A673 (cell line): ENCODE measurements at regions of chr2 and their contacts with region 1.

Region 1: DNA sequence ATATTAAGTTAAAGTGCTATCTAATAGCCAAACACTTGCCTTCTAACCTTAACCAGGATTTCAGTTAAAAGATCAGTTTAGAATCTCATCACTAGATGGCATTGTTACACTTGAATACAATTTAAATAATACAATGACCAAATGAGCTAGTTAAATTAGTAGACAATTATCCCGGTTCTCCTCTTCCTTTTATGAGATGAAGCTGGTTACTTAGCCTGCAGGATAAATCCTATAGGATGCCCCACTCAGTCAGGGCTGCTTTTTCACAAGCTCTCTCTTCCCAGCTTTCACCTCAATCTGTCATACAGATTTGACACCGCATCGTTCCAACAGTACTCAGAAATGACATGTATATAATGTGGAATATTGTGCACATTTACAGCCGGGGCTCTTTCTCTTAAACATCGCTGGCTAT is 678.8 kb downstream of the KCNJ3 start:
- DNase-seq: peak; percentile 25
- H3K4me3 ChIP-seq: no peak overlapping the region
- H3K27ac ChIP-seq: no peak overlapping the region
- H3K4me1 ChIP-seq: peaks cover 6% of the 10 kb centered on the region
- H3K27me3 ChIP-seq: no peaks in the 10 kb centered on the region
- CTCF ChIP-seq: peak; percentile 53; the same call in 1 of the 2 replicates

Region 2: GRCh38 chr2:155815886-155816285 is 438.6 kb after region 1 on chr2:
- CTCF ChIA-PET with region 1: interaction called, 3 read pairs
- POLR2A ChIA-PET with region 1: no interaction called
- intact Hi-C with region 1: loop called (anchors 2 kb)
- DNase-seq: peak; percentile 36
- H3K4me3 ChIP-seq: no peak overlapping the region
- H3K27ac ChIP-seq: no peak overlapping the region
- H3K4me1 ChIP-seq: no peaks in the 10 kb centered on the region
- H3K27me3 ChIP-seq: no peaks in the 10 kb centered on the region
- CTCF ChIP-seq: peak; percentile 44

Region 3: GRCh38 chr2:155913356-155913755 is 536.1 kb after region 1 on chr2:
- CTCF ChIA-PET with region 1: no interaction called
- POLR2A ChIA-PET with region 1: no interaction called
- intact Hi-C with region 1: no loop called
- DNase-seq: no peak
- H3K4me3 ChIP-seq: no peak overlapping the region
- H3K27ac ChIP-seq: no peak overlapping the region
- H3K4me1 ChIP-seq: no peaks in the 10 kb centered on the region
- H3K27me3 ChIP-seq: no peaks in the 10 kb centered on the region
- CTCF ChIP-seq: no peak

Region 4: DNA sequence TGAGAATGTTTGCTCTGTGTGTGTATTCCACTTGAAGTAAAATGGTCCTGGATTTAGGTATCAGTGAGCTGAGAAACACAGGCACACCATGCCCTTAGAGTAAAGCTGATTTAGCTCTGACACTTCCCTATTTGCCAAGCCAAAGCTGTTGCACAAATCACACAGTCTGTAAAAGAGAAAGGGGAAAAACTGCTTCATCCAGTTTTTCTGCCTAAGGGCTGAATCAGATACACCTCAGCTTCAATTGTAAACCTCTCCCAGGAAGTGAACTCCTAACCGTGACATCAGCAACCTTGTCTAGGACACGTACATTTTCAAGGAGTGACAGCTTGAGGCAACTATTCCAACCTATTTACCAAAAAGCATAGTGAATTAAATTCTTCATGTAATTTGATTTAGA is 804.9 kb after region 1 on chr2:
- CTCF ChIA-PET with region 1: no interaction called
- POLR2A ChIA-PET with region 1: no interaction called
- intact Hi-C with region 1: no loop called
- DNase-seq: no peak
- H3K4me3 ChIP-seq: no peak overlapping the region
- H3K27ac ChIP-seq: no peak overlapping the region
- H3K4me1 ChIP-seq: no peaks in the 10 kb centered on the region
- H3K27me3 ChIP-seq: peaks cover 8% of the 10 kb centered on the region
- CTCF ChIP-seq: no peak

Region 5: DNA sequence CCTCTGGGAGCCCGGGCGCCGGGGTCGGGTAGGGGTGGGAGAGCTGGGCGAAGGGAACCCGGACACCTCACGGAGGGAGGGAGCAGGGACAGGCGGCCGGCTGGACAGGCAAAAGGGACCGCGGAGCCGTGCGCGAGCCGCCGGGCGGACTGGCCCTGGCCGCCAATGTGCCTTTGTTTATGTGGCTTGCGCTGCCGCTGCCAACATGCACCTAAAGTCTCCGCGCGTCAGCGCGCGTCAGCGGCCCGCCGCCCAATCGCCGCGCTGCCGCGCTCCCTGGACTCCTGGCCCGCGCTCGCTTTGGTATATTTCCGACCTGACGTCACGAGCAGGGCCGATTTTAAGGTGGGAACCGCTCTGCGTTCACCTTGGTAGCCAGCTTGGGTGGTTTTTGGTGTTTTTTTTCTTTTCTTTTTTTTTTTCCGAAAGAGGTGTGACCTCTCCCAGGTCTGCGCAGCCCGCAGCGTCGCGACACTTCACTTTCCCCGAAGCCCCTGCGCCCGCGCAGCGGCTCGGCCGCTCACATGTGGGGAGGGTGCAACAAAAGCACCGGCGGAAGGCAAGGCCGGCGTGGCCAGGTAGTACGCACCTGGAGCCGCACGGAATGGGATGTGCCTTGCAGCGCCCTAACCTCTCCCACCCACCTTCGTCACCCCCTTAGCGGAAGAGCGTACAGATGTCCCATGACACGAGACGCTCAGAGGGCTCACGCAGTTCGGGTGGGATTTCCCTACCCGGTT is 955.4 kb after region 1 on chr2 and contains the start of gene NR4A2:
- CTCF ChIA-PET with region 1: no interaction called
- POLR2A ChIA-PET with region 1: no interaction called
- intact Hi-C with region 1: loop called (anchors 10 kb)
- DNase-seq: peak; percentile 87
- H3K4me3 ChIP-seq: peak within 1 kb of the TSS; percentile 79
- H3K27ac ChIP-seq: peak within 1 kb of the TSS; percentile 91
- H3K4me1 ChIP-seq: peaks cover 20% of the 10 kb centered on the region
- H3K27me3 ChIP-seq: no peaks in the 10 kb centered on the region
- CTCF ChIP-seq: no peak
- total RNA-seq, gene NR4A2: 1.1 and 1.8 TPM in 2 replicates

Region 6: GRCh38 chr2:156892467-156893281 is 1515.4 kb after region 1 on chr2:
- CTCF ChIA-PET with region 1: no interaction called
- POLR2A ChIA-PET with region 1: no interaction called
- intact Hi-C with region 1: loop called (anchors 5 kb)
- DNase-seq: peak; percentile 61
- H3K4me3 ChIP-seq: peak overlapping the region; percentile 26
- H3K27ac ChIP-seq: no peak overlapping the region
- H3K4me1 ChIP-seq: no peaks in the 10 kb centered on the region
- H3K27me3 ChIP-seq: peaks cover 14% of the 10 kb centered on the region
- CTCF ChIP-seq: peak; percentile 67

Region 7: GRCh38 chr2:157055660-157056199 is 1678.5 kb after region 1 on chr2:
- CTCF ChIA-PET with region 1: no interaction called
- POLR2A ChIA-PET with region 1: no interaction called
- intact Hi-C with region 1: loop called (anchors 5 kb)
- DNase-seq: peak; percentile 54
- H3K4me3 ChIP-seq: no peak overlapping the region
- H3K27ac ChIP-seq: no peak overlapping the region
- H3K4me1 ChIP-seq: peaks cover 5% of the 10 kb centered on the region
- H3K27me3 ChIP-seq: no peaks in the 10 kb centered on the region
- CTCF ChIP-seq: peak; percentile 67

Region 8: GRCh38 chr2:157194097-157194688 is 1816.9 kb after region 1 on chr2:
- CTCF ChIA-PET with region 1: no interaction called
- POLR2A ChIA-PET with region 1: no interaction called
- intact Hi-C with region 1: loop called (anchors 2 kb)
- DNase-seq: peak; percentile 71
- H3K4me3 ChIP-seq: no peak overlapping the region
- H3K27ac ChIP-seq: no peak overlapping the region
- H3K4me1 ChIP-seq: no peaks in the 10 kb centered on the region
- H3K27me3 ChIP-seq: no peaks in the 10 kb centered on the region
- CTCF ChIP-seq: peak; percentile 82

Region 9: DNA sequence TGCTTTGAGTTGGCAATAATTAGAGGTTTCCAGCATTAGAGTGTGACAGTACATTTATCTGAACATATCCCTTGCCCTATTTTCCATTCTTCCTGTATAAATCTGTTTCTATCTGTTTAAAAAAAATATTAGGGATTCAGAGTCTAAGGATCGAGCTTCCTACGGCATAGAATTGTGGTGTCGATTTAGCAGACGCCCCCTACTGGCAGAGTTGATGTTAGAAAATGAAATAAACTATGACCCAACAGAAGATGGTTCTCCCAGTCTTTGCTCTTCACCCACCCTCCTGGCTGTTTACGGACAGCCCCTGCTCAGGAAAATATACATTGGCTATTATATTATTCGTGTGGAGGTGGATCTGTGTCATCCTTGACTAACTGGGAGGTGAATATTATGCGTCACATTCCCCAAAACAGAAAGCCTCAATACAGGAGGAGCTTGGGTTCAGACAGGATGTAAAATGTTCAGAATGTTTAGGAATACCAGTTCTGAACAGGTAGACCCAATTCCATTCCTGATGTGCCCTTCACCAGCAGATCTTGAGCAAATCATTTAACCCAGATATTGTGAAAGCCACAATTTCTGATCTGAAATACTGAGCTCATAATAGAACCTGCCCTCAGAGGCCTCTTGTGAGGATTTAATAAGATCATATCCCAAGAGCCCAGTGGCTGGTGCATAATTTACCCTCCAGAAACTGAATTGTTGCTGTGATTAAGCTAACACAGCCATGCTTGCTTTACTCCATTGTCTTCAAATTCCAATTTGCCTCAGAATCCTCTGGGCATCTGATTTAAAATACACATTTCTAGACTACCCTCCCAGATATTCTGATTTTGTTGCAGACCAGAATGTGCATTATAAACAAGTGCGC is 1959.1 kb after region 1 on chr2:
- CTCF ChIA-PET with region 1: interaction called, 5 read pairs
- POLR2A ChIA-PET with region 1: no interaction called
- intact Hi-C with region 1: loop called (anchors 10 kb)
- DNase-seq: peak; percentile 60
- H3K4me3 ChIP-seq: no peak overlapping the region
- H3K27ac ChIP-seq: no peak overlapping the region
- H3K4me1 ChIP-seq: no peaks in the 10 kb centered on the region
- H3K27me3 ChIP-seq: no peaks in the 10 kb centered on the region
- CTCF ChIP-seq: peak; percentile 85